CD8-positive, alpha-beta T cell (primary cell): ENCODE measurements at regions of chr12 and their contacts with region 1.

Region 1: DNA sequence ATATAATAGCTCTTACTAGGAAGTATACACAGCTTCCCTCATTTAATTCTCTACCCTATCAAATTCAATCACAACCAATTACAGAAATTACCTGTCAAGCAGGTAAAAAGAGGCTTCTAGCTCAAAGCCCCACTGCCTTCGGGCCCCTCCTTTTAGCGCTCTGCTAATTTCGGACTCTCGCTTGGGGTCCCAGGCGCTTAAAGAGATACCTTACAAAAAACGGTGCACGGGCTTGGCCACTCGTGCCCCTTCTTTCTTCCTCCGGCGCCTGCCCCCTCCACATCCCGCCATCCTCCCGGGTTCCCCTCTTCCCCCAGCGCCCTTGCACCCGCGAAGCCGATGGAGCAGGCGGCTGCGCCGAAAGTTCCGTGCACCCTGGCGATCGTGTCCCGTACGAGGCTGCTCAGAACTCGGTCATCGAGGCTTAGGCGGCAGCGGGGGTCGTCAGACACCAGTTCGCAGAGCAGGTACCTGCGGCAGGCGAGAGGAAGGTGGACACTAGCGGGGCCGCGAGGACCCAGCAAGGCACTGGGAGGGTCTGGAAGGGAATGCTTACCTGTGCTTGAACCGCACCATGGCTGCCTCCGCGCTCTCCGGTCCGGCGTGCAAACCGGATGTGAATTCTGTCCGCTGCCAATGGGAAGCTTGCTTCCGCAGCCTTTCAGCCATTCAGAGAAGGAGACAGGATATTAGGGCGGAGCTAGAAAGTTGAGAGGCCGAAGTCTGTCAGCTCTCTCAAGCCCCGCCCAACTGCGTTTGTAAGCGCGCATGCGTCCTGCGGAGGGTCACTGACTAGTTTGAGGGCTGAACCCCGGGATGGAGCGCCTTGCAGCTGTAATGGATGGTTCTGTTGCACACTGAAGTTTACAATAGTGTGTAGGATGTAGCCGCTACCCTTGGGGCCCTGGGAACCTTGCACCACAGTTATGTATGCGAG is at the start of gene POP5:
- DNase-seq: peak; percentile 81 to 98 (median 92)
- ATAC-seq: peak; percentile 92
- H3K4me3 ChIP-seq: peak within 1 kb of the TSS; percentile 91 to 94
- H3K4me3 Mint-ChIP-seq: peak within 1 kb of the TSS; percentile 99
- H3K27ac ChIP-seq: peak within 1 kb of the TSS; percentile 71 to 76
- H3K27ac Mint-ChIP-seq: peak within 1 kb of the TSS; percentile 93
- H3K4me1 ChIP-seq: peaks cover 23% of the 10 kb centered on the region
- H3K4me1 Mint-ChIP-seq: peaks cover 44% of the 10 kb centered on the region
- H3K27me3 ChIP-seq: peaks cover 0 to 7% of the 10 kb centered on the region in 2 experiments
- H3K27me3 Mint-ChIP-seq: peaks cover 12% of the 10 kb centered on the region
- CTCF ChIP-seq: no peak
- total RNA-seq, gene POP5: 18.1 to 19.2 TPM

Region 2: DNA sequence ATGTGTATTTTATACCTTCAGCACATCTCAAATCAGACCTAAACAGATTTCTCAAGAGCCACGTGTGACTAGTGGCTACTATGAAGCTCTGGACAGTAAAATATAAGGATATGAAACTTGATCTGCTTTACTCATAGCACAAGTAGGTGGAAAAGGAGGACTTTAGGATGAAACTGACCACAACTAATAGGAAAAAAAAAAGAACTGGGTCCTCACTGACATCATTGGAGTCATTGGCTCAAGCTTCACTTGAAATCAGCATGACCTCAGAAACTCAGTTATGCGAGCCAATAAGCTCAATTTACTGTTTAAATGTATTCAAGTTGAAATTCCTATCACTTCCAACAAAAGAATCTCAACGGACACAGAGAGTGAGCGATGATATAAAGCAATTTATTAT is 669.9 kb before region 1 on chr12:
- CTCF ChIA-PET with region 1: no interaction called
- POLR2A ChIA-PET with region 1: no interaction called
- intact Hi-C with region 1: no loop called
- DNase-seq: no peak
- ATAC-seq: no peak
- H3K4me3 ChIP-seq: no peak overlapping the region
- H3K4me3 Mint-ChIP-seq: no peak overlapping the region
- H3K27ac ChIP-seq: no peak overlapping the region
- H3K27ac Mint-ChIP-seq: no peak overlapping the region
- H3K4me1 ChIP-seq: no peaks in the 10 kb centered on the region
- H3K4me1 Mint-ChIP-seq: no peaks in the 10 kb centered on the region
- H3K27me3 ChIP-seq: no peaks in the 10 kb centered on the region
- H3K27me3 Mint-ChIP-seq: peaks cover 7% of the 10 kb centered on the region
- CTCF ChIP-seq: no peak

Region 3: GRCh38 chr12:120301962-120302815 is 278.9 kb before region 1 on chr12 and contains the start of gene SIRT4:
- CTCF ChIA-PET with region 1: no interaction called
- POLR2A ChIA-PET with region 1: no interaction called
- intact Hi-C with region 1: loop called in 1 of 2 experiments (anchors 5 kb)
- DNase-seq: peak; percentile 76 to 97 (median 89)
- ATAC-seq: peak; percentile 99
- H3K4me3 ChIP-seq: peak within 1 kb of the TSS; percentile 76 to 89
- H3K4me3 Mint-ChIP-seq: peak within 1 kb of the TSS; percentile 86
- H3K27ac ChIP-seq: peak within 1 kb of the TSS; percentile 3 to 53
- H3K27ac Mint-ChIP-seq: peak within 1 kb of the TSS; percentile 69
- H3K4me1 ChIP-seq: no peaks in the 10 kb centered on the region
- H3K4me1 Mint-ChIP-seq: peaks cover 8% of the 10 kb centered on the region
- H3K27me3 ChIP-seq: no peaks in the 10 kb centered on the region
- H3K27me3 Mint-ChIP-seq: no peaks in the 10 kb centered on the region
- CTCF ChIP-seq: peak; percentile 89
- total RNA-seq, gene SIRT4: not detected

Region 4: DNA sequence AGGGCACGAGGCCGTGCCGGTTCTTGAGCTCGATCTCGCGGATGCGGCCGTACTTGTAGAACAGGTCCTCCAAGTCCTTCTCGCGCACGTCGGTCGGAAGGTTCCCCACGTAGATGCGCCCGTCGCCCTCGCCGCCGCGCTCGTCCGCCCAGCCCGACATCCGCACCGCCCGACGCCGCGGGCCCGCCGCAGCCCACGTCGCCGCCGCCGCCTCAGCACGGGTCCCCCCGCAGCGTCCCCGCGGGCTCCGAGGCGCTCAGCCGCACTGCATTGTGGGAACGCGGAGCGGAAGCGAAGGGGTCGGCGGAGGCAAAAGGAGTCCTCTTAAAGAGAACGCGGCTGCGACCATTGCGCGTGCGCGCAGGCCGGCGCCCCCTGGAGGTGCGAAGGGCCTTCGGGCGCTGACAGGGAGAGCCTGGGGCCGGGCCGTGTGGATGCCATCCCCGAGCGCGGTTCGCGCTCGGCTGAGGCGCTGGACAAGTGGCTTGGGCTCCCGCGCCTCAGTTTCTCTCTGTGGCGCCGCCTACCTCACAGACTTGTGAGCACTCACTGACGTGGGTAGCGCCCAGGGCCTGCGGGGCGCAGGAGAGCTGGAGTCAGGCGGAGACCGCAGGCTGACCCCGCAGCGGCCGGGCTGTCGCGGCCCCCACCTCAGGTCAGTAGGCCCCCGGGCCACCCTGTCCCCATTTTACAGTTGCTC is 111.5 kb before region 1 on chr12 and contains the start of gene SRSF9:
- CTCF ChIA-PET with region 1: no interaction called
- POLR2A ChIA-PET with region 1: no interaction called
- intact Hi-C with region 1: loop called in 1 of 2 experiments (anchors 1 kb)
- DNase-seq: peak; percentile 90 to 99 (median 97)
- ATAC-seq: peak; percentile 84
- H3K4me3 ChIP-seq: peak within 1 kb of the TSS; percentile 77 to 89
- H3K4me3 Mint-ChIP-seq: peak within 1 kb of the TSS; percentile 86
- H3K27ac ChIP-seq: peak within 1 kb of the TSS; percentile 70 to 82
- H3K27ac Mint-ChIP-seq: peak within 1 kb of the TSS; percentile 91
- H3K4me1 ChIP-seq: peaks cover 26% of the 10 kb centered on the region
- H3K4me1 Mint-ChIP-seq: peaks cover 40% of the 10 kb centered on the region
- H3K27me3 ChIP-seq: no peaks in the 10 kb centered on the region
- H3K27me3 Mint-ChIP-seq: no peaks in the 10 kb centered on the region
- CTCF ChIP-seq: peak; percentile 96
- total RNA-seq, gene SRSF9: 137 to 139 TPM

Region 5: GRCh38 chr12:120640840-120641833 is 60.1 kb after region 1 on chr12:
- CTCF ChIA-PET with region 1: interaction called, 101 read pairs
- POLR2A ChIA-PET with region 1: interaction called, 4 read pairs
- intact Hi-C with region 1: loop called (anchors 2 kb)
- DNase-seq: peak in 8 of 9 experiments; percentile 26 to 70 (median 60)
- ATAC-seq: peak; percentile 73
- H3K4me3 ChIP-seq: peak overlapping the region in 1 of 2 experiments; percentile 39
- H3K4me3 Mint-ChIP-seq: peak overlapping the region; percentile 80
- H3K27ac ChIP-seq: no peak overlapping the region
- H3K27ac Mint-ChIP-seq: no peak overlapping the region
- H3K4me1 ChIP-seq: peaks cover 12% of the 10 kb centered on the region
- H3K4me1 Mint-ChIP-seq: peaks cover 8% of the 10 kb centered on the region
- H3K27me3 ChIP-seq: peaks cover 13 to 23% of the 10 kb centered on the region in 2 experiments
- H3K27me3 Mint-ChIP-seq: peaks cover 48% of the 10 kb centered on the region
- CTCF ChIP-seq: no peak

Region 6: GRCh38 chr12:120710031-120710804 is 129.2 kb after region 1 on chr12 and contains the start of gene UNC119B:
- CTCF ChIA-PET with region 1: interaction called, 11 read pairs
- POLR2A ChIA-PET with region 1: no interaction called
- intact Hi-C with region 1: loop called (anchors 1 kb)
- DNase-seq: peak; percentile 38 to 85 (median 77)
- ATAC-seq: peak; percentile 88
- H3K4me3 ChIP-seq: peak within 1 kb of the TSS; percentile 64 to 68
- H3K4me3 Mint-ChIP-seq: peak within 1 kb of the TSS; percentile 93
- H3K27ac ChIP-seq: peak within 1 kb of the TSS; percentile 40 to 70
- H3K27ac Mint-ChIP-seq: peak within 1 kb of the TSS; percentile 89
- H3K4me1 ChIP-seq: peaks cover 22% of the 10 kb centered on the region
- H3K4me1 Mint-ChIP-seq: peaks cover 37% of the 10 kb centered on the region
- H3K27me3 ChIP-seq: no peaks in the 10 kb centered on the region
- H3K27me3 Mint-ChIP-seq: no peaks in the 10 kb centered on the region
- CTCF ChIP-seq: no peak
- total RNA-seq, gene UNC119B: 8.1 to 8.4 TPM

Region 7: DNA sequence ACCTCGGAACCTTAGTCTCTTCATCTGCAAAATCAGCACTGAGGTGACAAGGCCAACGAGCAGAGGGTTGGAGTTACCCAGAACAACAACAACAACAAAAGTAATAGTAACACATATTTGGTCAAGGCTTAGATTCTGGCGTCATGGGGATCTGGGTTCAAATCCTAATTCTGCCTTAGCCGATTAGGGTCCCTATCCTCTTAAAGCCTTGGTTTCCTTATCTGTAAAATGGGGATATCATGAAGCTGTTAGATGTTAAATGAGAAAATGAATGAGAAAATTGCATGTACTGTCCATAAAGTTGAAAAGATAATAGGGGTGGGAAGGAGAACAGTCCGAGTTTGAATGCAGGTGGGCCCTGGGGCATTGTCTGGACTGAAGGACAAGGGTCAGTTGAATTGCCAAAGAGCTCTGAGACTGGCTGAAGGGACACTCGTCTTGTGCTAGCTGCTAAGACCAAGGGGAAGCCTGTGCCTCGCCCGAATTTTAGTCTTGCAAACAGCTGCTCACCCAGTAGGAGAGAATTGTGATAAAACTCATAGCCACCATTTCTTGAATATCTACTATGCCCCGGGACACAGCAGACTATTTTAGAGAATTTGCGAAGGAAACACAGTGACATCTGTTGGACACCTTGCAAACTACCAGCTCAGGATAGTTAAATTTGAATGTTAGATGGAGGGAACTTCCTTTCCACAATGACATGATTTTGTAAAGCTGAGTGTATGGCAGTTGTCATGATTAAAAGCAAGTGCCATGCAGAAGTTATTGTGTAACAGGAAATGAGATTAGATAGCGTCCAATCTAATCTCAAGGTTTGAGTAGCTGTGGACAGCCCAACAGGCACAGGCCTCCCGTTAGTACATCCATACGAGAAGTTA is 390.5 kb after region 1 on chr12:
- CTCF ChIA-PET with region 1: interaction called, 10 read pairs
- POLR2A ChIA-PET with region 1: no interaction called
- intact Hi-C with region 1: loop called (anchors 1 to 2 kb)
- DNase-seq: peak in 7 of 9 experiments; percentile 11 to 78 (median 27)
- ATAC-seq: peak; percentile 95
- H3K4me3 ChIP-seq: no peak overlapping the region
- H3K4me3 Mint-ChIP-seq: no peak overlapping the region
- H3K27ac ChIP-seq: no peak overlapping the region
- H3K27ac Mint-ChIP-seq: no peak overlapping the region
- H3K4me1 ChIP-seq: no peaks in the 10 kb centered on the region
- H3K4me1 Mint-ChIP-seq: peaks cover 5% of the 10 kb centered on the region
- H3K27me3 ChIP-seq: no peaks in the 10 kb centered on the region
- H3K27me3 Mint-ChIP-seq: no peaks in the 10 kb centered on the region
- CTCF ChIP-seq: peak; percentile 69

Region 8: GRCh38 chr12:121110211-121110940 is 529.3 kb after region 1 on chr12:
- CTCF ChIA-PET with region 1: interaction called, 4 read pairs
- POLR2A ChIA-PET with region 1: no interaction called
- intact Hi-C with region 1: loop called in 1 of 2 experiments (anchors 5 kb)
- DNase-seq: peak; percentile 19 to 83 (median 67)
- ATAC-seq: peak; percentile 82
- H3K4me3 ChIP-seq: no peak overlapping the region
- H3K4me3 Mint-ChIP-seq: no peak overlapping the region
- H3K27ac ChIP-seq: no peak overlapping the region
- H3K27ac Mint-ChIP-seq: no peak overlapping the region
- H3K4me1 ChIP-seq: no peaks in the 10 kb centered on the region
- H3K4me1 Mint-ChIP-seq: peaks cover 3% of the 10 kb centered on the region
- H3K27me3 ChIP-seq: no peaks in the 10 kb centered on the region
- H3K27me3 Mint-ChIP-seq: no peaks in the 10 kb centered on the region
- CTCF ChIP-seq: peak; percentile 93